Mammary epithelial cell (primary cell): ENCODE measurements at regions of chr5 and their contacts with region 1.

Region 1: DNA sequence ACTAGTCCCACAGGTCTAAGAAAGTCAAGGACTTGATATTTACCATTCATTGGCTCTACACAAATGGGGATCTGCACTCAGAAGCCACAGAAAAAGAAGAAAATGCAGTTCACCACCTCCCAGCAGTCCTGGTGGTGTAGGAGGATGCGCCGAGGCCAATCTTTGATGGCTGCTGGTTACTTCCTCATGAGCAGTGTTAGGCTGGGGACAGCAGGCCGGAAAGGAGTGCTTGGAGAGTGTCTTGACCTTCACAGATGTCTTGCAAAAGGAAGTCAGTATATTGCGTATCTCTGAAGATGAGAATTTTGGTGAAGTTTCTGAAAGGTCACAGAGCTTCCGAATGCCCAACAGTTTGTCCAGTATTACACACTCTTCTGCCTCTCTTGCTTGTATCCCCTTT is 597.0 kb downstream of the EBF1 start:
- DNase-seq: no peak
- H3K4me3 ChIP-seq: no peak overlapping the region
- H3K27ac ChIP-seq: no peak overlapping the region
- H3K4me1 ChIP-seq: no peaks in the 10 kb centered on the region
- H3K27me3 ChIP-seq: no peaks in the 10 kb centered on the region
- CTCF ChIP-seq: no peak

Region 2: DNA sequence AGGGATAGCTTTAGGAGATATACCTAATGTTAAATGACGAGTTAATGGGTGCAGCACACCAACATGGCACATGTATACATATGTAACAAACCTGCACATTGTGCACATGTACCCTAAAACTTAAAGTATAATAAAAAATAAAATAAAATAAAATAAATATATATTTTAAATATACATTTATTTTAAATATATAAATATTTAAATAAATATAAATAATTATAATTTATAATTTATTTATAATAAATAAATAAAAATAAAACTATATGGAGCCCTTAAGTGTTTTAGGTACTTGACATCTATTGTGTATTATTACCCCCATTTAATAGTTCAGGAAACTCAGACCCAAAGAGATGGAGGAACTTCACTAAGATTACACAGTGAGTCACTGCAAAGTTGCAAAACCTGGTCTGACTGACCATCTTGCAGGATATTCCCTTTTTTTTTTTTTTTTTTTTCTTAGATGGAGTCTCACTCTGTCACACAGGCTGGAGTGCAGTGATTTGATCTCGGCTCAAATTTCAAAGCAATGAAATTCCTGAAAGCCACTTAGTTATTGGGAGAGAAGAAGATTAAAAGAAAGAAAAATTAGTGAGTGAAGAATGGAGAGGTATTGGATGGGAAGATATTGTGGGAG is 837.1 kb before region 1 on chr5:
- CTCF ChIA-PET with region 1: no interaction called
- dilution Hi-C with region 1: no loop called
- in situ Hi-C with region 1: no loop called
- intact Hi-C with region 1: no loop called
- DNase-seq: peak; percentile 85
- H3K4me3 ChIP-seq: no peak overlapping the region
- H3K27ac ChIP-seq: no peak overlapping the region
- H3K4me1 ChIP-seq: peaks cover 6% of the 10 kb centered on the region
- H3K27me3 ChIP-seq: no peaks in the 10 kb centered on the region
- CTCF ChIP-seq: no peak

Region 3: GRCh38 chr5:158586054-158586453 is 83.4 kb after region 1 on chr5:
- CTCF ChIA-PET with region 1: no interaction called
- dilution Hi-C with region 1: no loop called
- in situ Hi-C with region 1: no loop called
- intact Hi-C with region 1: loop called (anchors 2 kb)
- DNase-seq: no peak
- H3K4me3 ChIP-seq: no peak overlapping the region
- H3K27ac ChIP-seq: no peak overlapping the region
- H3K4me1 ChIP-seq: no peaks in the 10 kb centered on the region
- H3K27me3 ChIP-seq: no peaks in the 10 kb centered on the region
- CTCF ChIP-seq: no peak